CD4-positive, alpha-beta T cell (primary cell): ENCODE measurements at regions of chr10 and their contacts with region 1.

Region 1: GRCh38 chr10:6083523-6084475 is 5.0 kb upstream of the RBM17 start:
- DNase-seq: peak in 10 of 14 experiments; percentile 11 to 73 (median 32)
- ATAC-seq: peak; percentile 25
- H3K4me3 ChIP-seq: peak overlapping the region; percentile 1
- H3K4me3 Mint-ChIP-seq: peak overlapping the region; percentile 63
- H3K27ac ChIP-seq: peak overlapping the region in 1 of 2 donors; percentile 18
- H3K27ac Mint-ChIP-seq: peak overlapping the region; percentile 43
- H3K4me1 ChIP-seq: peaks cover 37% of the 10 kb centered on the region
- H3K4me1 Mint-ChIP-seq: peaks cover 48% of the 10 kb centered on the region
- H3K27me3 ChIP-seq: no peaks in the 10 kb centered on the region
- H3K27me3 Mint-ChIP-seq: no peaks in the 10 kb centered on the region
- CTCF ChIP-seq: no peak

Region 2: GRCh38 chr10:6068422-6068821 is 15.4 kb before region 1 on chr10:
- CTCF ChIA-PET with region 1: interaction called, 36 read pairs
- POLR2A ChIA-PET with region 1: interaction called, 51 read pairs
- intact Hi-C with region 1: loop called (anchors 2 kb)
- DNase-seq: peak in 9 of 14 experiments; percentile 14 to 76 (median 47)
- ATAC-seq: peak; percentile 82
- H3K4me3 ChIP-seq: peak overlapping the region; percentile 29
- H3K4me3 Mint-ChIP-seq: peak overlapping the region; percentile 75
- H3K27ac ChIP-seq: peak overlapping the region in 1 of 2 donors; percentile 44
- H3K27ac Mint-ChIP-seq: peak overlapping the region; percentile 84
- H3K4me1 ChIP-seq: peaks cover 63% of the 10 kb centered on the region
- H3K4me1 Mint-ChIP-seq: peaks cover 84% of the 10 kb centered on the region
- H3K27me3 ChIP-seq: no peaks in the 10 kb centered on the region
- H3K27me3 Mint-ChIP-seq: no peaks in the 10 kb centered on the region
- CTCF ChIP-seq: no peak